ENCODE measurements at regions of chr1 and their contacts with region 1.

Region 1: DNA sequence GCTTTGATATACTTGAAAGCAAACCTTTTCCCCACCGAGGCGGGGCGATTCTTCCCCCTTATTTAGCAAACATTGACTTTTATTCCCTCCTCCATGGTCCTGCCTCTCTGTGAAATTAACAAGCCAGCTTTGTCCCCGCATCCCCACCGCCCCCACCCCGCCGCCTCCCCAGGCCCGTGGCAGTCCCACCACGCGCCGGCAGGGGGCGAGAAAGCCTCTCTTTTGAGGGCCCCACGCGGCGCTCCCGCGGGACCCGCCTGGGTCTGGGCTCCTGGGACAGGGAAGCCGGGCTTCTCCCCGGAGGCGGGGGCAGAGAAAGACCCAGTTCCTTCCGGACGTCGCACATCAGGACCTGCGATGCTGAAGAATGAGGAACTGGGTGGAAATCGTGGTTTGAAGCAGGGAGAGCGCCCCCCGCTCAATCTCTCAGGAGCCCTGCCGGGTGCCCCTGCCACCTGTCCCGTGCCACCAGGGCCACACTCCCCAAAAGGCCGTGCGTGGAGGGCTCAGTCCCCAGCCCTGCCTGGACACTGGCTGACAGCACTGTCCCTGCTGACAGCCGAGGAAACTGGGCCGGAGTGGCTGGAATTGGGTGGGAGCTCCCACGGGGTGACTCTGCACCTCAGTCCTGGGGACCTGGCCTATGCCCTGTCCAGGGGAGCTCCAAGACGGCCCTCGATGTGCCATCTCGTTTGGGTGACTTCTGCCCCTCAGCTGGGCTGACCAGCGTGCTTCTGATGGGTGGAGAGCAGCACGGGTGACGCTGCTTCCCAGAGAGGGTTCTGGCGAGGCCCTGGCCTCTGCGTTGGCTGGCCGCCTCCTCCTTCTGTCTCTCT is 8.6 kb upstream of the ACTRT2 start:
- DNase-seq: no peak
- H3K4me3 ChIP-seq: no peak overlapping the region
- H3K27ac ChIP-seq: no peak overlapping the region
- H3K4me1 ChIP-seq: no peaks in the 10 kb centered on the region
- H3K27me3 ChIP-seq: no peaks in the 10 kb centered on the region
- CTCF ChIP-seq: peak; percentile 14 to 78 (median 24)
- POLR2A ChIP-seq: no peak

Region 2: GRCh38 chr1:3031401-3032221 is 18.9 kb after region 1 on chr1:
- intact Hi-C with region 1: no loop called
- DNase-seq: no peak
- H3K4me3 ChIP-seq: no peak overlapping the region
- H3K27ac ChIP-seq: no peak overlapping the region
- H3K4me1 ChIP-seq: no peaks in the 10 kb centered on the region
- H3K27me3 ChIP-seq: no peaks in the 10 kb centered on the region
- CTCF ChIP-seq: no peak
- POLR2A ChIP-seq: no peak

Region 3: DNA sequence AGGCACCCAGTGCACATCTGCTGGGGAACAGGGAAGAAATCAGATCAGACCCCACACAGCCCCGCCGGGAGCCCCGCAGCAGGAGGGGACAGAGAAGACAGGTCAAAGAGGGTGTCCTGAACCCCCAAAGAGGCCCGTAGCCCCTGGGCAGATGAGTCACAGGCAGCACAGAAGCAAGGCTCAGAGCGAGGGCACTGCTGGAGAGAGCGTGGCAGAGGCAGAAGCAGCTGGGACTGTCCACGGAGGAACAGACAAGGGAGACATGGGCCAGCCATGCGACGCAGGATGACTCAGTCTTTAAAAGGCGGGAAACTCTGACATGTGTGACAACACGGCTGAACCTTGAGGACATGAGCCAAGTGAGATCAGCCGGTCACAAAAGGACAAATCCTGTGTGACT is 41.8 kb after region 1 on chr1:
- intact Hi-C with region 1: no loop called
- DNase-seq: no peak
- H3K4me3 ChIP-seq: no peak overlapping the region
- H3K27ac ChIP-seq: no peak overlapping the region
- H3K4me1 ChIP-seq: no peaks in the 10 kb centered on the region
- H3K27me3 ChIP-seq: no peaks in the 10 kb centered on the region
- CTCF ChIP-seq: no peak
- POLR2A ChIP-seq: no peak

Region 4: GRCh38 chr1:3283849-3284248 is 271.2 kb after region 1 on chr1:
- intact Hi-C with region 1: loop called (anchors 5 kb)
- DNase-seq: no peak
- H3K4me3 ChIP-seq: no peak overlapping the region
- H3K27ac ChIP-seq: no peak overlapping the region
- H3K4me1 ChIP-seq: no peaks in the 10 kb centered on the region
- H3K27me3 ChIP-seq: no peaks in the 10 kb centered on the region
- CTCF ChIP-seq: peak in 1 of 3 experiments; percentile 32
- POLR2A ChIP-seq: no peak

Region 5: DNA sequence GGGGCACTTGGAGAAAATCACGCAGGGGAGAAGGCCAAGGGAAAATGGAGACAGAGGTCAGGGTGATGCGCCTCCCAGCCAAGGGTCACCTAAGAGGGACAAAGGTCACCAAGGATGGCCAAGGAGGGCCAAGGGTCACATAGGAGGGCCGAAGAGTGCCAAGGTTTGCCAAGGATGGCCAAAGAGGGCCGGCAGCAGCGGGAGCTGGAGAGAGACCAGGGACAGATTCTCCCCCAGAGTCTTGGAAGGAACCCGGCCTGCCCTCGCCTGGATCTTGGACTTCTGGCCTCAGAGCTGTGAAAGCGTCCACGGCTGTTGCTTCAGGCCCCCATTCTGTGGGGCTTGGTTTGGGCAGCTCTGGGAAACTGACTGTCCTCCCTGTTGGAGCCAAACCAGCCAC is 416.2 kb after region 1 on chr1:
- intact Hi-C with region 1: loop called (anchors 5 kb)
- DNase-seq: no peak
- H3K4me3 ChIP-seq: no peak overlapping the region
- H3K27ac ChIP-seq: no peak overlapping the region
- H3K4me1 ChIP-seq: no peaks in the 10 kb centered on the region
- H3K27me3 ChIP-seq: no peaks in the 10 kb centered on the region
- CTCF ChIP-seq: no peak
- POLR2A ChIP-seq: no peak

Region 6: DNA sequence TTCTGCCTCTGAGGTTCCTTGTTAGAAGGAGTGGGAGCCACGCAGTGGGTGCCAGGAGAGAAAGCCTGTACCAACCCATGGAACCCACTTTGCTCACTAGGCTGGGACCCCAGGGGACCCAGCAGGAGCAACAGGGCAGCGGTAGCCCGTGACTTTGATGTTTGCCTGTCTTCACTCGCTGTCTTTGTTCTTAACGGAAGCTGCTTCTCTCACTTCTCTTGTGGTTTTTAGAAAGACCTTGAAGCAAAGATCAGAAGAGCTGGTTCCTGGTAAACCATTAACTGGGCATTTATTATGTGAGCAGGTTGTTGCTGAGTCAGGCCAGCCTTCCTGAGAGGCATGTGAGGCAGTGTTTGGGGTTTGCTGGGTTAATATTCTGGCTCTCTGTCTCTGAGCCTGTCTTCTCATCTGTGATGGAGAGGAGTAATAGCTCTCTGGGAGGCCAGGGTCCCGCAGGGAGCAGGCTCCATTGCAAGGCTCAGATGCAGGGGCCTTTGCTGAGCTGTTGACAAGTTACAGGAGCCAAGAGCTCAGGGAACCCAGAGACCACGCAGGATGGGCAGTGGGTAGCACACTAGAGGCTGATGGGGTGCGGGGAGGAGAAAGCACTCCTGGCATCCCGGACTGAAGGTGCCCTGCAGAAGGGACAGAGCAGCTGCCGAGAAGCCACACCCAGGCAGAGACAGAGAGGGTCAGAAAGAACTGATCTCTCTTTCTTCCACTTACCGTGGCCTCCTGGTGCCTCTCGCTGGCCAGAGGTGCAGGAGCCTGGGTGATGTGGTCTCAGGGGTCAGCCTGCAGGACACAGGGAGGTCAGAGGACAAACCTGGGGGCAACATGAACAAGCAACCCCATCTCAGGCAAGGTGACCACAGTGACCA is 1254.9 kb after region 1 on chr1:
- intact Hi-C with region 1: no loop called
- DNase-seq: no peak
- H3K4me3 ChIP-seq: no peak overlapping the region
- H3K27ac ChIP-seq: no peak overlapping the region
- H3K4me1 ChIP-seq: no peaks in the 10 kb centered on the region
- H3K27me3 ChIP-seq: no peaks in the 10 kb centered on the region
- CTCF ChIP-seq: no peak
- POLR2A ChIP-seq: no peak